Dorsolateral prefrontal cortex (tissue), 120 donors: ENCODE measurements at regions of chr5 and their contacts with region 1.

Region 1: GRCh38 chr5:135094339-135095051 is 60.5 kb upstream of the PITX1 start:
- DNase-seq: peak in 1 of 10 donors; percentile 17
- H3K4me3 ChIP-seq: no peak overlapping the region
- H3K27ac ChIP-seq: no peak overlapping the region
- H3K27me3 ChIP-seq: peaks cover 0 to 4% (median 0%) of the 10 kb centered on the region in 45 donors
- CTCF ChIP-seq: no peak

Region 2: DNA sequence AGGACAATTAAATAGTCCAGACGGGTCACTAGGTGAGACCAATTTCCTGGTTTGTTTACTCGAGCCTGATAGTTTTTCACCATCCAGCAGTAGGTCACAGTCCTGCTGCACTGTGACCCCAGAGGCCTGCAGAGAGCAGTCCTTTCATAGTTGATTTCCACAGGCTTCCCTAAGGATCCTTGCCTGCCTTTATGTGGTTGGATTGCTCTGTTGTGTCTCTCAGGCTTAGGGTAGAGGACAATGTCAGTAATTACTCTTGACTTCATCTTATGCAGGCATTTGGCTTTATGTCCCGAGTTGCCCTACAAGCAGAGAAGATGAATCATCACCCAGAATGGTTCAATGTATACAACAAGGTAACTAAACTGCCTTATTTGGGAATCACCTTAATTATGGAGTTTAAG is 135.7 kb before region 1 on chr5:
- intact Hi-C with region 1: no loop called
- DNase-seq: no peak
- H3K4me3 ChIP-seq: no peak overlapping the region
- H3K27ac ChIP-seq: no peak overlapping the region
- H3K27me3 ChIP-seq: no peaks in the 10 kb centered on the region
- CTCF ChIP-seq: no peak

Region 3: DNA sequence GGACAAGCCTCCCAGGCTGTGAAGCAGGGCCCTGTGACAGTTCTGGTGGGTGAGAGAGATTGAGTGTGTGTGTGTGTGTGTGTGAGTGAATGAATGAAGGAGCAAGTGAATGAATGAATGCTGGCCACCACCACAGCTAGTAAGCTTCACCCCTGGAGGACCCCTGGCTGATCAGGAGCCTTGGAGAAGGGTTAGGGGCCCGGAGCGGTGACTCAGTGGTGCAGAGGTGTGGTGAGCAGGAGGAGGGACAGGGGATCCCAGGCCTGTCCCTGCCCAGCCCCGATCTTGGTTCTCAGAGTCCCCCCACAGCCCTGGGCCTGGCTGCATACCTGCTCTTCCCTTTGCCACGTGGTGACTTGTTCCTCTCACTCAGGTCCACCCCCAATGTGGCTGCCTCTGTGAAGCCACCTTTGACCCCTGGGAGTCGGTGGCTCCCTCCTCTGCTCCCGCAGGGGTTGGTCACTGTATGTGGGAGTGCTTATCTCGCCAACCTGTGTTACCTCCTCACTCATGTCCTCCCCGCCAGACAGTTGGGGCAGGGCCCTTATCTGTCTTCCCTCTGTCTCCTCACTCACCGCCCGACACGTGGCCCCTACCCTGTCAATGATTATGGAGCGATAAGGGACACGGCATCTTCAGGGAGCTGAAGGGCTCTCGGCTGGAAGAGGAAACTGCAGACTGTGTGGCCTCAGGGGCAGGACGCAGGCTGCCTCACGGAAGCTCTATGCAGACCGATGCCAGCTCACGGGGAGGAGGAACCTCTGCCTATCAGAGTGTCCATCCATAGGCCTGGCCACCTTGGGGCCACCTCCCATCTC is 39.4 kb after region 1 on chr5:
- intact Hi-C with region 1: loop called in 1 of 2 experiments (anchors 5 kb)
- DNase-seq: peak in 1 of 10 donors; percentile 16
- H3K4me3 ChIP-seq: no peak overlapping the region
- H3K27ac ChIP-seq: no peak overlapping the region
- H3K27me3 ChIP-seq: peaks cover 0 to 5% (median 0%) of the 10 kb centered on the region in 45 donors
- CTCF ChIP-seq: no peak